ENCODE measurements at regions of chr2 and their contacts with region 1.

Region 1: DNA sequence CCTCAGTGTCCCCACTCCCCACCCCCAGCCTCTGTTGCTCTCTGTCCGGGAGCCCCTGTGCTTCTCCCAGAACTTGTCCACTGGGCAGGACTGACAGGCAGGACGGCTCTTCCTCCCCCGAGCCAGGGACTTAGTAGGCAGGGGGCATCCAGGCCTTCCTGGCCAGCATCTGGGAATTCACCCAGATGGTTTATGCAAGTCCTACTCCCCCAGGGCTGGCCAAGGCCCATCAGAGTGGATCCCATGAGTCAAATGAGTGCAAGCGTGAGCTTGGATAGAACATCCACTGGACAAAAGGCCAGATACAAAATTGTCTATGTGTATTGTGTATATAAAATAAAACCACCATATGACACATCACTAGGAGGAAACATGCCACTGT is 7.5 kb downstream of the NMUR1 start:
- DNase-seq: no peak
- H3K4me3 ChIP-seq: no peak overlapping the region
- H3K27ac ChIP-seq: no peak overlapping the region
- H3K4me1 ChIP-seq: no peaks in the 10 kb centered on the region
- H3K27me3 ChIP-seq: no peaks in the 10 kb centered on the region
- CTCF ChIP-seq: no peak
- POLR2A ChIP-seq: no peak

Region 2: GRCh38 chr2:230849633-230850357 is 673.0 kb before region 1 on chr2:
- intact Hi-C with region 1: no loop called
- DNase-seq: no peak
- H3K4me3 ChIP-seq: no peak overlapping the region
- H3K27ac ChIP-seq: no peak overlapping the region
- H3K4me1 ChIP-seq: no peaks in the 10 kb centered on the region
- H3K27me3 ChIP-seq: no peaks in the 10 kb centered on the region
- CTCF ChIP-seq: peak; percentile 22 to 48 (median 29)
- POLR2A ChIP-seq: no peak

Region 3: GRCh38 chr2:231597014-231597611 is 74.3 kb after region 1 on chr2:
- intact Hi-C with region 1: loop called (anchors 10 kb)
- DNase-seq: no peak
- H3K4me3 ChIP-seq: no peak overlapping the region
- H3K27ac ChIP-seq: peak overlapping the region; percentile 56
- H3K4me1 ChIP-seq: peaks cover 28% of the 10 kb centered on the region
- H3K27me3 ChIP-seq: no peaks in the 10 kb centered on the region
- CTCF ChIP-seq: no peak
- POLR2A ChIP-seq: no peak

Region 4: DNA sequence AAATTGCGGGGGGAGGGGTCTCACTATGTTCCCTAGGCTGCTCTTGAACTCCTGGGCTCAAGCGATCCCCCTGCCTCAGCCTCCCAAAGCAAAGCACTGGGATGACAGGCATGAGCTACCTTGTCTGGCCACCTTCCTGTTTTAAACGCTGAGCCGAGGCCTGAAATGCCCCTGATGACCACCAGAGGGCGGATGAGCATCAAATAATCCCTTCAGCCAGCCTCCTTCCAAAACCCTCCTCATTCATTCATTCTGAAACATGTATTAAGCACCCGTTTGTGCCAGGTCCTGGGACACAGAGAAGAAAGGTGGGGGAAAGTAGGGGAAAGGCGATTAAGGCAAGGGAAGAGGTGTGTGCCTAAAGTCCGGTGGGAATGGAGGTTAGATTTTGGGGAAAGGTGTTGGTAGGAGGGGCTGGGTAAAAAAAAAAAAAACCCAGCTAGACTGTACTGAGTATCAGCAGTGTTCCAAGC is 154.9 kb after region 1 on chr2:
- intact Hi-C with region 1: no loop called
- DNase-seq: no peak
- H3K4me3 ChIP-seq: no peak overlapping the region
- H3K27ac ChIP-seq: no peak overlapping the region
- H3K4me1 ChIP-seq: peaks cover 45% of the 10 kb centered on the region
- H3K27me3 ChIP-seq: no peaks in the 10 kb centered on the region
- CTCF ChIP-seq: peak; percentile 78 to 99 (median 99)
- POLR2A ChIP-seq: no peak